AG04450 (cell line): ENCODE measurements at regions of chr5 and their contacts with region 1.

Region 1: GRCh38 chr5:91928754-91929521 is 545.8 kb upstream of the ARRDC3 start:
- DNase-seq: no peak
- H3K4me3 ChIP-seq: no peak overlapping the region
- H3K27ac ChIP-seq: no peak overlapping the region
- H3K27me3 ChIP-seq: no peaks in the 10 kb centered on the region
- CTCF ChIP-seq: peak; percentile 59

Region 2: GRCh38 chr5:90390928-90391327 is 1538.0 kb before region 1 on chr5:
- CTCF ChIA-PET with region 1: no interaction called
- POLR2A ChIA-PET with region 1: no interaction called
- DNase-seq: no peak
- H3K4me3 ChIP-seq: no peak overlapping the region
- H3K27ac ChIP-seq: no peak overlapping the region
- H3K27me3 ChIP-seq: no peaks in the 10 kb centered on the region
- CTCF ChIP-seq: no peak

Region 3: GRCh38 chr5:92222449-92222848 is 293.5 kb after region 1 on chr5:
- CTCF ChIA-PET with region 1: interaction called, 15 read pairs
- POLR2A ChIA-PET with region 1: no interaction called
- DNase-seq: no peak
- H3K4me3 ChIP-seq: no peak overlapping the region
- H3K27ac ChIP-seq: no peak overlapping the region
- H3K27me3 ChIP-seq: no peaks in the 10 kb centered on the region
- CTCF ChIP-seq: peak; percentile 31; the same call in 1 of the 2 replicates